ENCODE measurements at regions of chr17 and their contacts with region 1.

Region 1: DNA sequence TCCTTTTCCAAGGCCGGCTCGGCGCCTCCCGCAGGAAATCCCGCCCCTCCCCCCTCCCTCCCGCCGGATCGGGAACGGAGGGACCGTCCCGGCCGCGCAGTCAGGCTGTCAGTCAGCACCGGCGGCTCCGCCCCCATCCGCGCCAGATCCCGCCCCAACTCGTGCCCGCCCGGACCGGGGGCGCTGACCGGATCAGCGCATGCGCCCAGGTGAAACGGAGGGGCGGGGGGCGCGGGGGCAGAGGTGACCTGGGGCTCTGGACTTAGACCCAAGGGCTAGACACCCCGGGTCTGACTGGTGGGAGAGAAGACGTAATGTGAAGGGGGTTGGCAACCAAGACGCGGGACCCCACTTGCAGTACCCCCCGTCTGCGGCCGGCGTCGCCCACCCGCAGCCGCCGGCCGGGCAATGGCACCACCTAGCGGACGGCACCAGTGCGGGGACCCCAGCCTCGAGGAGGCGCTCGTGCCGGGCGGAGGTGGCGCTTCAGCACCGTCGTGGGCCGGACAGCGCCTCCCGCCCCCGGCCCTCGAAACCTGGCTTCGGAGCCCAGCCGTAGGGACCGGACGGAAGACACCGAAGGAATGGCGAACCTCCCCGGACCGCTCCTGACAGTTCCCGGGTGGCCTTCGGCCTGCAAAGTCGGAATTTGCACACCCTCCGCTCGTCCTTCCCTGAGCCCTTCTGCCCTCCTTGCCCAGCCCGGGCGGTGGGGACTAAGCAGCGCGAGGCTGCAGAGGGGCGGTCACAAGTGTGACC is at the start of gene CASKIN2:
- DNase-seq: peak; percentile 86
- H3K4me3 ChIP-seq: peak within 1 kb of the TSS; percentile 57 to 87 (median 70)
- H3K27ac ChIP-seq: no peak within 1 kb of the TSS
- H3K4me1 ChIP-seq: peaks cover 25% of the 10 kb centered on the region
- H3K27me3 ChIP-seq: no peaks in the 10 kb centered on the region
- CTCF ChIP-seq: peak; percentile 80 to 98
- total RNA-seq, gene CASKIN2: 10.5 to 22.1 TPM

Region 2: DNA sequence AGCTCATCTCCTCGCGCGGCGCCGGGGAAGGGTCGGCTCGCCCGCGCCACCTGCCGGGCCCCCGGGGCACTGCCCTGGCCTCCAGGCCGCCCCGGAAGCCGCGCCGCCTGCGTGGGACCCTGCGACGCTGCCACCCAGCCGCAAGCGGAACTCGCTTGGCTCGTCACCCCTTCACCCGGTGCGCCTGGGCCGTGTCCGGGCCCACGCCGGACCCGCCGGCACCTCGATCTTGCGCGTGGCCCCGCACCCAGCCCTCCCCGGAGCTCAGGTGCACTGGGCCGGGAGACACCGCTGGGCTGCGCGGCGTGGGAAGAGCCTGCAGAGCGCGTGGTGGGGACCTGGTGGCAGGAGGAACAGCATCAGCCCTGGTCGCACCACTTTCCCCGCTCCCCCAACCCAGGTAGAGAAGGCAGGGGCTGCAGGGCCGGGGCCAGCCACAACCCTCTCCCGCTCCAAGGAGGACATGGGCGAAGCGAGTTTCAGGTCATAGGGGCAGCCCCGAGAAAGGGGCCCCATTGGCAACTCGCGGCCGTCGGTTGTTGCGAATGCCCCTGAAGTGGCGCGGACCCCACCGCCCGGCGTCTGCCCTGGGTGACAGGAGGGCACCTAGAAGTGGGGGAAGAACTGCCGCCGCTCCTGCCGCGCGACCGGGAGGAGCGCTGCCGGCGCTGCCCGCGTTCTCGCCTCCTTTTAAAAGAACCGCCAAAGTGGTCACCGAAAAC is 244.3 kb before region 1 on chr17:
- CTCF ChIA-PET with region 1: no interaction called
- dilution Hi-C with region 1: no loop called
- in situ Hi-C with region 1: no loop called
- intact Hi-C with region 1: loop called (anchors 5 kb)
- DNase-seq: peak; percentile 60
- H3K4me3 ChIP-seq: peak overlapping the region; percentile 59 to 76 (median 70)
- H3K27ac ChIP-seq: no peak overlapping the region
- H3K4me1 ChIP-seq: peaks cover 20% of the 10 kb centered on the region
- H3K27me3 ChIP-seq: no peaks in the 10 kb centered on the region
- CTCF ChIP-seq: peak; percentile 53 to 69

Region 3: GRCh38 chr17:75405365-75406221 is 110.1 kb before region 1 on chr17 and contains the start of gene GRB2:
- CTCF ChIA-PET with region 1: no interaction called
- dilution Hi-C with region 1: loop called (anchors 5 kb)
- in situ Hi-C with region 1: no loop called
- intact Hi-C with region 1: loop called (anchors 5 kb)
- DNase-seq: peak; percentile 93
- H3K4me3 ChIP-seq: peak within 1 kb of the TSS; percentile 82 to 93 (median 90)
- H3K27ac ChIP-seq: peak within 1 kb of the TSS; percentile 63
- H3K4me1 ChIP-seq: peaks cover 13% of the 10 kb centered on the region
- H3K27me3 ChIP-seq: no peaks in the 10 kb centered on the region
- CTCF ChIP-seq: no peak
- total RNA-seq, gene GRB2: 61.5 to 78.6 TPM

Region 4: GRCh38 chr17:75456417-75457046 is 59.1 kb before region 1 on chr17 and contains the start of gene TMEM94:
- CTCF ChIA-PET with region 1: no interaction called
- dilution Hi-C with region 1: no loop called
- in situ Hi-C with region 1: no loop called
- intact Hi-C with region 1: loop called (anchors 1 kb)
- DNase-seq: peak; percentile 96
- H3K4me3 ChIP-seq: peak within 1 kb of the TSS; percentile 79 to 91 (median 90)
- H3K27ac ChIP-seq: peak within 1 kb of the TSS; percentile 64
- H3K4me1 ChIP-seq: peaks cover 6% of the 10 kb centered on the region
- H3K27me3 ChIP-seq: no peaks in the 10 kb centered on the region
- CTCF ChIP-seq: no peak
- total RNA-seq, gene TMEM94: 23.0 to 42.3 TPM

Region 5: GRCh38 chr17:75589012-75589918 is 73.6 kb after region 1 on chr17:
- CTCF ChIA-PET with region 1: no interaction called
- dilution Hi-C with region 1: no loop called
- in situ Hi-C with region 1: no loop called
- intact Hi-C with region 1: loop called (anchors 2 kb)
- DNase-seq: peak; percentile 64
- H3K4me3 ChIP-seq: peak overlapping the region; percentile 41 to 65 (median 46)
- H3K27ac ChIP-seq: no peak overlapping the region
- H3K4me1 ChIP-seq: peaks cover 6% of the 10 kb centered on the region
- H3K27me3 ChIP-seq: peaks cover 4% of the 10 kb centered on the region
- CTCF ChIP-seq: peak in 1 of 2 donors; percentile 30